KBM-7 (cell line): ENCODE measurements at regions of chr5 and their contacts with region 1.

Region 1: GRCh38 chr5:135466178-135467050 is 14.3 kb upstream of the TIFAB start:
- DNase-seq: peak; percentile 82

Region 2: GRCh38 chr5:135551593-135552447 is 85.4 kb after region 1 on chr5:
- in situ Hi-C with region 1: loop called (anchors 10 kb)
- DNase-seq: peak; percentile 85

Region 3: DNA sequence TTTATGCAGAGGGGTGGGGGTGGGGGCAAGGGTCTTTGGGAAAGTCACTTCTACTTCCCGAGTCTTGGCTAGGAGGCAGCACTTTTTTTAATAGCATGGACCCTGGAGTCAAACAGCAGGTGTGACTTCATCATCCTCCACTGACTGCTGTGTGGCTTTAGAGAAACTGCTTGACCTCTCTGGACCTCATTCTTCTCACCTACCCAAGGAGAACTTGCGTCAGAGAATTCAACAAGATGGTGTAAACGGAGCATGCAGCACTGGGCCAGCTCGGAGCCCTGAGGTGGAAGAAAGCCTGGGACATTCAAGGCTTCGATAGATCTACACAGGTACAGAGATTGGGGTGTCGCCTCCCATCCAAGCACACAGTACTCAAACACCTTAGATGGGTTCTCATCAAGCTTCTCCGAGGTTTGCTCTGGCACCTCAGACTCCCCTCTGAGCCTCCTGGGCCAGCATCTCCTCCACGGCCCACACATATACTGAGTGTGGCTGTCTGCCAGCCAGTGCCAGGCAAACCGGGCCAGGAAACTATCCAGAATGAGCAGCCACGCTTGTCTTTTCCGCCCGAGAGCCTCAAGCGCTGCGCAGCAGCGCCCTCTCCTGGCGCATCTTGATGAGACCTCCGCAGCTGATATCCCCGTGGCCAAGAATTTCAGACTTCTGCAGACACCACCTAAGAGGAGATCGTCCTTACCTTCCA is 363.4 kb after region 1 on chr5:
- in situ Hi-C with region 1: loop called (anchors 10 kb)
- DNase-seq: peak; percentile 74